Mammary epithelial cell (primary cell): ENCODE measurements at regions of chr7 and their contacts with region 1.

Region 1: GRCh38 chr7:47818796-47819606 is 129.3 kb downstream of the PKD1L1 start:
- DNase-seq: peak; percentile 46
- H3K4me3 ChIP-seq: no peak overlapping the region
- H3K27ac ChIP-seq: no peak overlapping the region
- H3K4me1 ChIP-seq: no peaks in the 10 kb centered on the region
- H3K27me3 ChIP-seq: no peaks in the 10 kb centered on the region
- CTCF ChIP-seq: peak; percentile 94 to 100

Region 2: DNA sequence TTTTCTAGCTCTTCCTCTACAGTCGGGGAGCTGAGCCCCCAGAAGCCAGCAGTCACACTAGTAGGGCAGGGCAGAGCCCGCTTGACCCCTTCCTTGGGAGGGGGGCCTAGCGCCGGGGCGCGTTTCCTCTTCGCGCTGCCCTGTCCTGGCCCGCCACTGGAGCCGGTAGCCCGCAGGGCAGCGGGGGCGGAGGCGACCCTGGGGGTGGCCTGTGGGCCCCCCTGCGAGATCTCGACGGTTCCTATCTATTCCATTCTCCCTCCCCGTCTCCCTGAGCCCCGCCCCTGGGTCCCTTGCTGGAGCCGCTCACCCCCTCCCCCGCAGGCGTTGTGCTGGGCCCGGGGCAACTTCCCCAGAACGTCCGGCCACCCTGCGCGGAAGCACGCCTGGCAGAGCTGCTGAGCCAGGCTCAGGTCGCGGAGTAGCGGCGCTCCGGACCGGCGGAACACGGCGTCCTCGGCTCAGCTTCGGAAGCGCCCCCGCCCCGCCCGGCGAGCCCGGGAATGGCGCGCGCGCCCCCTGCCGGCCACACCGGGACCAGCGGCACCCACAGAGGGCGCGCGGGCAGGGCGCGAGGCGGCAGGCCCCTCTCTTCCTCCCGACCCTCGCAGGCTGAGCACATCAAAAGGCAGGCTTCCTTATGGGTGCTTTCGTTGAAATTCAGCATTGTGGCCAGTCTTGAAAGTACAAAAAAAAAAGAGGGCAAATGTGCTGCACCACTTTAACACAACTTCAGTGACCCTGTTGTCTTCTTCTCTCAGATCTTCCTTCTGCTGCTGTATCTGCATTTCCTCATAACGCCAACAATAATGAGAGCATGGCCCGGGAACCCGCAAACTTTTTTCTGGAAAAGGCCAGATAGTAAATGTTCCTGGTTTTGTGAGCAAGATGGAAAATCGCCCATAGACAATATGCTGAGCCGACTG is 564.7 kb before region 1 on chr7:
- CTCF ChIA-PET with region 1: no interaction called
- dilution Hi-C with region 1: no loop called
- in situ Hi-C with region 1: loop called in 1 of 2 experiments (anchors 25 kb)
- intact Hi-C with region 1: no loop called
- DNase-seq: peak; percentile 36
- H3K4me3 ChIP-seq: peak overlapping the region; percentile 50 to 71 (median 62)
- H3K27ac ChIP-seq: no peak overlapping the region
- H3K4me1 ChIP-seq: peaks cover 13% of the 10 kb centered on the region
- H3K27me3 ChIP-seq: no peaks in the 10 kb centered on the region
- CTCF ChIP-seq: peak; percentile 58 to 69

Region 3: GRCh38 chr7:47444379-47445057 is 374.5 kb before region 1 on chr7:
- CTCF ChIA-PET with region 1: no interaction called
- dilution Hi-C with region 1: no loop called
- in situ Hi-C with region 1: loop called (anchors 5 to 10 kb)
- intact Hi-C with region 1: loop called (anchors 1 kb)
- DNase-seq: peak; percentile 16
- H3K4me3 ChIP-seq: no peak overlapping the region
- H3K27ac ChIP-seq: no peak overlapping the region
- H3K4me1 ChIP-seq: no peaks in the 10 kb centered on the region
- H3K27me3 ChIP-seq: no peaks in the 10 kb centered on the region
- CTCF ChIP-seq: peak; percentile 55 to 71

Region 4: GRCh38 chr7:47581806-47582763 is 236.9 kb before region 1 on chr7 and contains the start of gene TNS3:
- CTCF ChIA-PET with region 1: no interaction called
- dilution Hi-C with region 1: no loop called
- in situ Hi-C with region 1: loop called in 1 of 2 experiments (anchors 25 kb)
- intact Hi-C with region 1: no loop called
- DNase-seq: peak; percentile 47
- H3K4me3 ChIP-seq: peak within 1 kb of the TSS; percentile 78 to 81 (median 80)
- H3K27ac ChIP-seq: peak within 1 kb of the TSS; percentile 42
- H3K4me1 ChIP-seq: peaks cover 28% of the 10 kb centered on the region
- H3K27me3 ChIP-seq: no peaks in the 10 kb centered on the region
- CTCF ChIP-seq: peak in 1 of 2 donors; percentile 2
- total RNA-seq, gene TNS3: 15.0 to 43.5 TPM

Region 5: DNA sequence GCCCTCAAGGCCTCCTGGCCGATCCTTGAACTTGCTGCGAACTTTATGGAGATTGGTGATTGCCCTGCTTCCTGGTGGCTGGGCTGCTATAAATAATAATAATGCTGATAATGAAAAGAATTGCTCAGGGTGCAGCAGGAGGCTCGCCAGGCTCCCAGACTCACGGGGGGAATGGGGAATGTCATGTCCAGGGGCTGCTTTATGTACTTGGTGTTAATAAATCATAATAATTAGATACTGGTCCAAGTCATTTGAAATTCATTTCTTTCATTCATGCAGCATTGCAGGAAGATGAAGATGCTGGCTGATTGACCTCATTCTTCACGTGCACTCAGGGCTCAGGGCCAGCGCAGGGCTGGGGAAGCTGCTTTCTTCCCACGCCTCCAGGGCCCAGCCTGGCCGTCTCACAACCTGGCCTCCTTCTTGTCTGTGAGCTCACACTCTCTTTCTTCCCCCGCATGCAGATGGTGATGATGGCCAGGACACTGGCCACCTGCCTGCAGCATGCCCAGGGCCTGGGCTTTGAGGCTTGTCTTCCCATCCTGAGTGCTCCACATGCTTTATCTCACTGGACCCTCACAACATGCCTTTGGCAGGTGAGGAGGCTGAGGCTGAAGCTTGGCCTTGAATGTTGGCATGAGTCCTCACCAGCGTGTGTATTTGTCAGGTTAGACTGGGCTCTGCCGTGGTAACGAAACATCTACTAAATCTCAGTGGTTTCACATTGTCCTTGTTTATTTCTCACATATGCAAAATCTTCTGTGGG is 98.7 kb before region 1 on chr7:
- CTCF ChIA-PET with region 1: interaction called, 3 read pairs
- dilution Hi-C with region 1: loop called (anchors 5 kb)
- in situ Hi-C with region 1: no loop called
- intact Hi-C with region 1: loop called (anchors 10 kb)
- DNase-seq: no peak
- H3K4me3 ChIP-seq: no peak overlapping the region
- H3K27ac ChIP-seq: no peak overlapping the region
- H3K4me1 ChIP-seq: peaks cover 8% of the 10 kb centered on the region
- H3K27me3 ChIP-seq: no peaks in the 10 kb centered on the region
- CTCF ChIP-seq: no peak

Region 6: GRCh38 chr7:47792521-47793121 is 26.4 kb before region 1 on chr7:
- CTCF ChIA-PET with region 1: interaction called, 5 read pairs
- dilution Hi-C with region 1: no loop called
- in situ Hi-C with region 1: no loop called
- intact Hi-C with region 1: loop called (anchors 1 kb)
- DNase-seq: no peak
- H3K4me3 ChIP-seq: no peak overlapping the region
- H3K27ac ChIP-seq: no peak overlapping the region
- H3K4me1 ChIP-seq: peaks cover 4% of the 10 kb centered on the region
- H3K27me3 ChIP-seq: no peaks in the 10 kb centered on the region
- CTCF ChIP-seq: peak; percentile 41 to 55

Region 7: DNA sequence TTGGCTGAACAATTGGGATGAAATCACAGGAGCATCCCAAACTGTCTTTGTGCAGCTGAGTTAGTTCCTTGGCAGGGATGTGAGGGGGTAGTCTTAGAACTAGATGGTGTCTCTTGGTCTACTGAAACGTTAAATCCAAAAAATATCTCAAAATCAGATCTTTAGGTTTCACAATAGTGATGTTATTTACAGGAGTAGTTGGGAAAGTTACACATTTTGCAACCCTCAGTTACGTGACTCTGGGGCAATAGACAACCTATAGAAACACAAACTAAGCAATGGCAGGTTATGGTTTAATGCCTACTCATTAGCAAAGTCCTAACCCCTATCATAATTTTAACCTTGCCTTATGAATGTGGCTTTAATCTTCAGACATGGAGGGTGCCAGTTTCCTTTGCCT is 105.3 kb after region 1 on chr7:
- CTCF ChIA-PET with region 1: no interaction called
- dilution Hi-C with region 1: no loop called
- in situ Hi-C with region 1: no loop called
- intact Hi-C with region 1: no loop called
- DNase-seq: no peak
- H3K4me3 ChIP-seq: no peak overlapping the region
- H3K27ac ChIP-seq: no peak overlapping the region
- H3K4me1 ChIP-seq: no peaks in the 10 kb centered on the region
- H3K27me3 ChIP-seq: peaks cover 2% of the 10 kb centered on the region
- CTCF ChIP-seq: no peak

Region 8: GRCh38 chr7:48004032-48004431 is 185.0 kb after region 1 on chr7:
- CTCF ChIA-PET with region 1: no interaction called
- dilution Hi-C with region 1: no loop called
- in situ Hi-C with region 1: no loop called
- intact Hi-C with region 1: no loop called
- DNase-seq: no peak
- H3K4me3 ChIP-seq: no peak overlapping the region
- H3K27ac ChIP-seq: no peak overlapping the region
- H3K4me1 ChIP-seq: peaks cover 4% of the 10 kb centered on the region
- H3K27me3 ChIP-seq: no peaks in the 10 kb centered on the region
- CTCF ChIP-seq: no peak